ENCODE measurements at regions of chr15 and their contacts with region 1.

Region 1: DNA sequence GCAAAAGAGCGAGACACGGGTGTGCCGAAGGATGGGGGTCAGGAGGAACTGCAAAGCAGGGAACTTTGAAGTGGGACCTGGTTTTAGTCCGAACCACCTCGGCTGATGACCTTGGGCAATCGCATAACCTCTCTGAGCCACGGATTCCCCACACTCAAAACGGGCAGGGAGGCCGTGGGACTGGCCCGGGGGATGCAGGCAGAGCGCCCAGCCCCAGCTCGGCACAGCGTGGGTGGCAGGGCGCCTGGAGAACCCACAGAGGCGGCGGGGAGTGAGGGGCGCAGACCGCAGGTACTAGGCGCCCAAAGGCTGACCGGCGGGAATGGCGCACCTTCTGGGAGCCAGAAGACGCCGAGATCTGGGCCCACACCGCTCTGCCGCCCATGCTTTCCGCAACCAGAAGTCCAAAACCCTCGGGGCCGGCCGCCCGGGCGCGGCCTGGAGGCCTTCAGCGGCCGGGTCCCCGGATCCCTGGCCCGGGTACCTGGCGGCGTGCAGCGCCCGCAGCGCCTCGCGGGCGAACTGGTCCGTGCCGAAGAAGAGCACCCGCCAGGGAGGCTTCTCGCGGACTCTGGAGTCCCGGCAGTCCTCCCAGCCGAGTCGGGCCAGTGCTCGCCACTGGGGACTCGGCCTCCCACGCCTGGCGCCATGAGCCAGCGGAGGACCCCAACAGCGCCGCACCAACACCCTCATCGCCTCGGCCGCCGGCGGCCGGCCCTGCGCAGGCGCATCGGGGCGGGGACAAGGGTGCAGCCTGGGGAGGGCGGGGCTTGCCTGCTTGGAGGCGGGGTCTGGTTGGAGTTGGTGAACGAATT is at the start of gene MTFMT:
- DNase-seq: peak; percentile 88
- H3K4me3 ChIP-seq: peak within 1 kb of the TSS; percentile 80
- H3K27ac ChIP-seq: no peak within 1 kb of the TSS
- H3K4me1 ChIP-seq: peaks cover 23% of the 10 kb centered on the region
- CTCF ChIP-seq: no peak; the same call in 1 of the 2 replicates
- total RNA-seq, gene MTFMT: 9.1 and 9.7 TPM in 2 replicates

Region 2: GRCh38 chr15:64841258-64842095 is 187.7 kb before region 1 on chr15 and contains the start of gene PLEKHO2:
- CTCF ChIA-PET with region 1: no interaction called
- POLR2A ChIA-PET with region 1: interaction called, 3 read pairs
- intact Hi-C with region 1: loop called (anchors 5 kb)
- DNase-seq: peak; percentile 94
- H3K4me3 ChIP-seq: peak within 1 kb of the TSS; percentile 92
- H3K27ac ChIP-seq: peak within 1 kb of the TSS; percentile 56
- H3K4me1 ChIP-seq: peaks cover 64% of the 10 kb centered on the region
- CTCF ChIP-seq: peak; percentile 59
- total RNA-seq, gene PLEKHO2: 10.1 and 12.0 TPM in 2 replicates

Region 3: GRCh38 chr15:65086017-65086679 is 57.0 kb after region 1 on chr15:
- CTCF ChIA-PET with region 1: no interaction called
- POLR2A ChIA-PET with region 1: no interaction called
- intact Hi-C with region 1: loop called (anchors 1 kb)
- DNase-seq: peak; percentile 20
- H3K4me3 ChIP-seq: no peak overlapping the region
- H3K27ac ChIP-seq: no peak overlapping the region
- H3K4me1 ChIP-seq: no peaks in the 10 kb centered on the region
- CTCF ChIP-seq: 0 out of 2 replicates have a peak, but pooled peaks have one; percentile 37

Region 4: GRCh38 chr15:65233696-65234095 is 204.6 kb after region 1 on chr15:
- CTCF ChIA-PET with region 1: no interaction called
- POLR2A ChIA-PET with region 1: no interaction called
- intact Hi-C with region 1: no loop called
- DNase-seq: no peak
- H3K4me3 ChIP-seq: no peak overlapping the region
- H3K27ac ChIP-seq: no peak overlapping the region
- H3K4me1 ChIP-seq: no peaks in the 10 kb centered on the region
- CTCF ChIP-seq: no peak

Region 5: GRCh38 chr15:65292938-65293518 is 263.9 kb after region 1 on chr15:
- CTCF ChIA-PET with region 1: no interaction called
- POLR2A ChIA-PET with region 1: no interaction called
- intact Hi-C with region 1: loop called (anchors 1 kb)
- DNase-seq: no peak
- H3K4me3 ChIP-seq: no peak overlapping the region
- H3K27ac ChIP-seq: no peak overlapping the region
- H3K4me1 ChIP-seq: peaks cover 37% of the 10 kb centered on the region
- CTCF ChIP-seq: no peak

Region 6: DNA sequence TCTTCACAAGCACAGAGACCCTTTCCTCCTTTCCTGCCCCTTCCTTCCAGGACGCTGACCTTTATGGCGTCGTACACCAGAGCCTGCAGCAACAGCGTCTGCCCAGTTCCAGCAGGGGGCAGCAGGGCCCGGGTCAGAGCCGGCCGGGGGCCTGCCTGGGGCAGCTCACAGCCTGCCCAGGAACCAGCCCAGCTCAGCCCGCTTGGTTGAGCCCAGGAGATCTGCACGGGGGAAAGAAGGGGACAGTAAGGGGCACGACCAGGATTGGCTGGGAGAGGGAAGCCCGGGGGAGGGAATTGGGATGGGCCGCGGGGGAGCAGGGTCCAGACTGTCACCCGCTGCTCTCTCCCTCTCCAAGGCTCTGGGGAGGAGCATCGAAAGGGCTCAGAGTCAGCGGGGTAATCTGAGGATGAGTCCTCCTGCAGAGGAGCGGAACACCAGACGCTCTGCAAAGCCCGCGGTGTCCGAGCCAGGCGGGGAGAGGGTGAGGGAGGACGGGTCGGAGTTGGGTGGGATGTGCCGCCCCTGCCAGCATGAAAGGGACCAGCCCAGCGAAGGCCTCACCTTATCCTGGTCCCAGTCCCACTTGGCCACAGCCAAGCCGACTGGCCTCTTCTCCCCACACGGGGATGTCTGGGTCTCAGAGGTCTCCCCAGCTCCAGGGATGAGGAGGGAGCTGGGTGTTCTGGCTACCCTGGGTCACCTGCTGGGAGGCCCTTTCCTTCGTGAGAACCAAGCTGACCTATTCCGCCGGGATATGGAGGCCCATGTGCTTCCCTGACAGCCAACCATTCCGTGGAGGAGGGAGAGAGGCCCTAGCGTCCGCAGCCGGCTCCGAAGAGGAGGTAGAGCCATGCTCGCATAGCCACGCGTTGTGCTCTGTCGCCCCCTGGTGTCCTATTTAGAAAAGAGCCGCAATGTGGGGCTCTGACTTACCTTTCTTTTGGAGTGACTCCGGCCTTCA is 356.0 kb after region 1 on chr15:
- CTCF ChIA-PET with region 1: no interaction called
- POLR2A ChIA-PET with region 1: no interaction called
- intact Hi-C with region 1: loop called (anchors 2 kb)
- DNase-seq: peak; percentile 85
- H3K4me3 ChIP-seq: peak overlapping the region; percentile 54
- H3K27ac ChIP-seq: no peak overlapping the region
- H3K4me1 ChIP-seq: peaks cover 8% of the 10 kb centered on the region
- CTCF ChIP-seq: peak; percentile 90

Region 7: GRCh38 chr15:66580643-66581042 is 1551.5 kb after region 1 on chr15:
- CTCF ChIA-PET with region 1: no interaction called
- POLR2A ChIA-PET with region 1: no interaction called
- intact Hi-C with region 1: no loop called
- DNase-seq: no peak
- H3K4me3 ChIP-seq: no peak overlapping the region
- H3K27ac ChIP-seq: no peak overlapping the region
- H3K4me1 ChIP-seq: no peaks in the 10 kb centered on the region
- CTCF ChIP-seq: no peak

Measured in OCI-LY7 (cell line).